H1 (cell line): ENCODE measurements at regions of chr12 and their contacts with region 1.

Region 1: DNA sequence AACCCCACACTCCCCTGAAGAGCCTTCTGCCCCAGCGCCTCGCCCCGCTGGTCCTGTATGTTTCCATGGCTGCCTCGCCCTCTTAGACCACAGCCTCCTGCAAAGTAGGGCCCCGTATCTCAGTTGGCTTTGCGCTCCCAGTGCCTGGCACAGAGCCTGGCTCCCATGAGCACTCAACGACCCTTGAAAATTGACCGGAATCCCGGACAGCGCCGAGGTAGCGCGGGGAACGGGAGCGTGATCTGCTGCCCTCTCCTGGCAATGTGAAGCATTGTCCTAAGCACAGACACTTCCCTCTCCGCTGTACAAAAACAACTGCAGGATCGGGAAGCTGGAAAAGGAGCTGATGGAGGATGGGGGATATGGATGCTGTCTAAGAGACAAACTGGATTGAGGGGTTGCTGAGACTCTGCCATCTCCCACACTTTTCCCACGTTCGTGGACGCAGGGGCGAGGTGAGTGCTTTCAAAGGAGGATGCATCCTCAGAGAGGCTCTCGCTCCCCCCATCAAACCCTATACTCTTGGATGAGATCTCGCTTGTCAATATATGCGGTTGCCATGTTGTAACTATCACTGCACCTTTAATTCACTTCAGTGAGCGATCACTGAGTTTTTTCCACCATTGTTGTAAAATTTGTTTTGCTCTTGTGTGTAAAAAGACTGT is 10.7 kb upstream of the FKBP4 start:
- DNase-seq: peak in 1 of 2 experiments; percentile 88
- H3K4me3 ChIP-seq: no peak overlapping the region; a peak in 1 of 8 replicates
- H3K27ac ChIP-seq: no peak overlapping the region
- H3K4me1 ChIP-seq: peaks cover 2 to 5% (median 3%) of the 10 kb centered on the region in 4 experiments; a peak in 6 of 7 replicates
- H3K27me3 ChIP-seq: no peaks in the 10 kb centered on the region; a peak in 1 of 7 replicates
- CTCF ChIP-seq: peak; percentile 93 to 97 (median 96)
- EP300 ChIP-seq: no peak
- POLR2A ChIP-seq: no peak
- RAD21 ChIP-seq: peak; percentile 90 to 97

Region 2: GRCh38 chr12:2682296-2683251 is 101.5 kb before region 1 on chr12:
- CTCF ChIA-PET with region 1: interaction called, 43 read pairs
- POLR2A ChIA-PET with region 1: no interaction called
- DNase-seq: no peak
- H3K4me3 ChIP-seq: no peak overlapping the region
- H3K27ac ChIP-seq: no peak overlapping the region
- H3K4me1 ChIP-seq: peaks cover 0 to 7% (median 0%) of the 10 kb centered on the region in 4 experiments; a peak in 3 of 7 replicates
- H3K27me3 ChIP-seq: no peaks in the 10 kb centered on the region
- CTCF ChIP-seq: peak; percentile 59 to 67 (median 65)
- EP300 ChIP-seq: no peak
- POLR2A ChIP-seq: no peak
- RAD21 ChIP-seq: peak; percentile 69 to 80

Region 3: GRCh38 chr12:2733477-2734355 is 50.4 kb before region 1 on chr12:
- CTCF ChIA-PET with region 1: interaction called, 175 read pairs
- POLR2A ChIA-PET with region 1: interaction called, 10 read pairs
- DNase-seq: no peak
- H3K4me3 ChIP-seq: no peak overlapping the region
- H3K27ac ChIP-seq: no peak overlapping the region
- H3K4me1 ChIP-seq: no peaks in the 10 kb centered on the region; a peak in 1 of 7 replicates
- H3K27me3 ChIP-seq: no peaks in the 10 kb centered on the region; a peak in 1 of 7 replicates
- CTCF ChIP-seq: peak in 2 of 3 experiments; percentile 3 to 30; a peak in 3 of 4 replicates
- EP300 ChIP-seq: no peak
- POLR2A ChIP-seq: no peak
- RAD21 ChIP-seq: peak; percentile 9 to 32; a peak in 1 of 4 replicates

Region 4: DNA sequence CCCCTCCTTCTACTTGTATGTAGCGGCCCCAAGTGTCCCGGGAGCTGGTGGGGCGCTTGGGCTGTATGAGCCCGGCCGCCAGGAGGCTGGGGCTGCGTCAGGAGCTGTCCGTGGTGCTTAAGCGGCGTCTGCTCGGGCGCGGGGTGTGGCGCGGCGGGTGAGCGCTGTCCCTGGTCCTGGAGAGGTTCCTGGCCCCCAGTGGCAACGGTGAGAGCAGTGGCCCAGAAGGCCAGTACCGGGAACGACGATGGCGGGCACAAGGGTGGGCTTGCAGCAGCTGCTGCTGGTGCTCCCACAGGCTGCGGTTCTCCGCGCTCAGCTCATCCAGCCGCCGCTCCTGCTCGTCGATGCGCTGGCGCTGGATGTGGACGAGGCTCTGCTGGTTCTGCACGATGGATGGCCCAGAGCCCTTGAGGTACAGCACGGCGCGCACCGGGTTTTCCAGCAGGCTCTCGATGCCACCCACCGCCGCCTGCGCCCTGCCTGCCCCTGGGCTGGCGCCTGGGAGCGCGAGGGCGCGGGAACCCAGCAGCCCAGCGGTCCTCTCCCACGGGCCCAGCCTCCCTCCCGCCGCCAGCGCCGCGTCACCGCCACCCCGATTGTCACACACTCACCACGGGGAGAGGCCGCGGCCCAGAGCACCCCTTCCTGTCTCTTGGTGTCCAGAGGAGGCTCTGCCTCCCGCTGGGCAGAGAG is 31.2 kb before region 1 on chr12:
- CTCF ChIA-PET with region 1: interaction called, 55 read pairs
- POLR2A ChIA-PET with region 1: interaction called, 4 read pairs
- DNase-seq: peak; percentile 74 to 97
- H3K4me3 ChIP-seq: peak overlapping the region in 3 of 4 experiments; percentile 5 to 45 (median 14); a peak in 5 of 8 replicates
- H3K27ac ChIP-seq: no peak overlapping the region
- H3K4me1 ChIP-seq: peaks cover 6 to 18% (median 15%) of the 10 kb centered on the region in 4 experiments
- H3K27me3 ChIP-seq: peaks cover 0 to 9% (median 8%) of the 10 kb centered on the region in 4 experiments; a peak in 4 of 7 replicates
- CTCF ChIP-seq: peak in 2 of 3 experiments; percentile 1 to 25; a peak in 2 of 4 replicates
- EP300 ChIP-seq: peak in 1 of 2 experiments; percentile 68; a peak in 1 of 3 replicates
- POLR2A ChIP-seq: no peak
- RAD21 ChIP-seq: peak; percentile 20 to 42; a peak in 2 of 4 replicates

Region 5: GRCh38 chr12:2773199-2773875 is 10.7 kb before region 1 on chr12:
- CTCF ChIA-PET with region 1: interaction called, 19 read pairs
- POLR2A ChIA-PET with region 1: no interaction called
- DNase-seq: no peak
- H3K4me3 ChIP-seq: no peak overlapping the region
- H3K27ac ChIP-seq: no peak overlapping the region
- H3K4me1 ChIP-seq: peaks cover 0 to 2% (median 0%) of the 10 kb centered on the region in 4 experiments; a peak in 1 of 7 replicates
- H3K27me3 ChIP-seq: no peaks in the 10 kb centered on the region
- CTCF ChIP-seq: no peak
- EP300 ChIP-seq: no peak
- POLR2A ChIP-seq: no peak
- RAD21 ChIP-seq: no peak

Region 6: GRCh38 chr12:2801050-2801783 is 17.1 kb after region 1 on chr12:
- CTCF ChIA-PET with region 1: interaction called, 34 read pairs
- POLR2A ChIA-PET with region 1: interaction called, 12 read pairs
- DNase-seq: no peak
- H3K4me3 ChIP-seq: no peak overlapping the region
- H3K27ac ChIP-seq: no peak overlapping the region
- H3K4me1 ChIP-seq: no peaks in the 10 kb centered on the region; a peak in 1 of 7 replicates
- H3K27me3 ChIP-seq: no peaks in the 10 kb centered on the region
- CTCF ChIP-seq: no peak
- EP300 ChIP-seq: no peak
- POLR2A ChIP-seq: no peak
- RAD21 ChIP-seq: no peak

Region 7: GRCh38 chr12:3236345-3237187 is 452.5 kb after region 1 on chr12:
- CTCF ChIA-PET with region 1: no interaction called
- POLR2A ChIA-PET with region 1: no interaction called
- DNase-seq: no peak
- H3K4me3 ChIP-seq: no peak overlapping the region
- H3K27ac ChIP-seq: no peak overlapping the region
- H3K4me1 ChIP-seq: peaks cover 3 to 12% (median 9%) of the 10 kb centered on the region in 4 experiments
- H3K27me3 ChIP-seq: no peaks in the 10 kb centered on the region
- CTCF ChIP-seq: no peak
- EP300 ChIP-seq: no peak
- POLR2A ChIP-seq: no peak
- RAD21 ChIP-seq: no peak